AG04449 (cell line): ENCODE measurements at regions of chr2 and their contacts with region 1.

Region 1: DNA sequence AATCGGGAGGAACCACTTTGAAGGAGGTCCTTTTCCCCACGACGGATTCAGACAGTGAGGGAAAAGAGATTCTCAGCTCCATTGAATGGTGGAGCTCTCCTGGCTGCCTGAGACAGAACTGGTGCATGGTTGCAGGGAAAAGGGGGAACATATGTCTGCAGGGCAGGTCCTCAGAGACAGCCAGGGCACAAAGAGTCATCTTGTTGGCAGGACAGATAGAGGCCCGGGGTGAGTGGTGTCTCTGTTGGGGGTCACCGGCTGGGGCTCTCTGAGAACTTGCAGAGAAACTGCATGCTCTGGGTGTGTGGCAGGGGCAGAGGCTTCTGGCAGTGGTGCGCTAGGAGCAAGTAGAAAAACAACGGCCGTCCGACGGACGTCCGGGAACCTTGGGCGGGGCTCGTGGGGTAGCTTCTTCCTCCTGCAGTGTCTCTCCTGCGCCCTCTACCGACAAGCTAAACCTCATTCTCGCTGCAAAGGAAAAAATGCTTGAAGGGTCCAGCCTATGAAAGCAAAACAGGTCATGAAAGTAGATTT is 94.3 kb downstream of the CDCA7 start:
- DNase-seq: no peak
- H3K4me3 ChIP-seq: peak overlapping the region; percentile 41
- CTCF ChIP-seq: peak; percentile 83

Region 2: GRCh38 chr2:173458991-173459780 is 10.2 kb after region 1 on chr2:
- CTCF ChIA-PET with region 1: interaction called, 17 read pairs
- POLR2A ChIA-PET with region 1: no interaction called
- DNase-seq: no peak
- H3K4me3 ChIP-seq: no peak overlapping the region
- CTCF ChIP-seq: no peak

Region 3: GRCh38 chr2:173472112-173472511 is 23.1 kb after region 1 on chr2:
- CTCF ChIA-PET with region 1: interaction called, 16 read pairs
- POLR2A ChIA-PET with region 1: no interaction called
- DNase-seq: no peak
- H3K4me3 ChIP-seq: no peak overlapping the region
- CTCF ChIP-seq: no peak